H1 (cell line): ENCODE measurements at regions of chr11 and their contacts with region 1.

Region 1: DNA sequence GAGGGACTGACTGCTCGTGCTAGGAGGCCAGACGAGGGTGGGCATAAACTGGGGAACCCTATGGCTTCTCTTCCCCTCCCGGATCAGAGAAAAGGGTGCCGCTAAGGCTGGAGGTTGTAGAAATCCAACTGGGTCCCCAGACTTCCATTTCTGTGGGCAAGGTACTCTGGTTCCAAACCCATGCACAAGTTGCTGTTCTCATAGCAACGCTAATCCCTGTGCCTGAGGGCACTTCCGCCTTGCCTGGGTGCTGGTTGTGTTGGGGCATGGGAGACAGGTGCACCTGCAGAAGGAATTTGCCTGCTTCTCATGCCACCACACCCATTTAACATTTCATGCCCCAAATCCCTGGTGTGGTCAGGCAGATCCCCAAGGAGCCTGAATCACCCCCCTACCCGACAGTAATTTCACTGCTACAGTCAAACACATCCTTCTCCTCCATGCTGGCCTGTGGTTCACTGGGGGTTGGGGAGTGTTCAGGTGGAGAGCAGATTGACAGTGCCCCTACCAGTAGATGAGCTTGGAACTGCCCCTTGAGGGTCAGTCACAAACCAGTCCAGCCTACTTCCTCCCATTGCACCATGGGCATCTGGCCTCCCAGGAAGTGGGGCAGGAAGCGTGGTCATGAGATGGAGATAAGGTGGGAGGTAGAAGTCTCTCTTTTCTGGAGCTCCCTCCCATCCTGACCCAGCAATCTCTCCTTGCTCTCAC is 1.2 kb downstream of the C2CD2L start:
- DNase-seq: peak in 1 of 2 experiments; percentile 63
- H3K4me3 ChIP-seq: peak overlapping the region; percentile 71 to 83 (median 75)
- H3K27ac ChIP-seq: no peak overlapping the region
- H3K4me1 ChIP-seq: peaks cover 0 to 20% (median 5%) of the 10 kb centered on the region in 4 experiments; a peak in 5 of 7 replicates
- H3K27me3 ChIP-seq: peaks cover 2 to 20% (median 15%) of the 10 kb centered on the region in 4 experiments
- CTCF ChIP-seq: no peak
- EP300 ChIP-seq: no peak
- POLR2A ChIP-seq: no peak
- RAD21 ChIP-seq: no peak

Region 2: DNA sequence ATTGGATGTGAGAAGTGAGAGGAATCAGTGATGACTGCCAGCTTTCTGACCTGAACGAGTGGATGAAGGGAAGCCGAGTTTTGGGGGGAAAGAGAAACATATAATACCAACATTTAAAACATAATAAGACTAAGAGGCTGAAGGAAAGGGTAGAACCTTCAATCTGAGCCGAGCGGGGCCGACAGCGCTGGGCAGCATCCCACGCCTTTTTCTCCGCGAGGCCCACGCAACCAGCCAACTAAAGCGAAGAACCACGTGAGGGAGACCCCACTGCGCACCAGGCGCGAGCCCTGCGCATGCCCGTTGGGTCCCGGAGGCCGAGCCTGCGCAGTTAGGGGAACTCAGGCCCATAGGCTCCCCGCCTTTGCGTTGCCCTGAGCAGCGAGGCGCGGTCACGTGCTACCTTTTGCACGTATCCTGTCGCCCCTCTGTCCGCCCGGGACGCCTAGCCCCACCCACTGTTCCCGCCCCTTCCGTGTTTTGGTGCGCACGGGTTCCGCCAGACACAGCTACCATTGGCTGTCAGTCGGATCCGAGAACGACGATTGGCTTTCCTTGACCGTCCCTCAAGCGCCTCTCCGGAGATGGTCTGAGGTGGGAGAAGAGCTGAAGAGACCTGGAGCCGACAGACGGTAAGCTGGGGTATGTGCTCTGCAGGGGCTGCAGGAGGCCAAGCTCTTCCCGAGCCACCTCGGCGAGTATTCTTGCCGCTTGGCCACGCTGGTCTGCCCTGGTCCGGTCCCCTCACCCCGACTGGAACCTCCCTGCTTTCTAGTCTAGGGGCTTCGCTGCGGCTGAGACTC is 12.9 kb after region 1 on chr11 and contains the start of gene HINFP:
- CTCF ChIA-PET with region 1: interaction called, 26 read pairs
- POLR2A ChIA-PET with region 1: interaction called, 42 read pairs
- DNase-seq: peak; percentile 98
- H3K4me3 ChIP-seq: peak within 1 kb of the TSS; percentile 63 to 97 (median 93)
- H3K27ac ChIP-seq: peak within 1 kb of the TSS; percentile 68
- H3K4me1 ChIP-seq: peaks cover 2 to 10% (median 6%) of the 10 kb centered on the region in 4 experiments; a peak in 6 of 7 replicates
- H3K27me3 ChIP-seq: no peaks in the 10 kb centered on the region
- CTCF ChIP-seq: no peak
- EP300 ChIP-seq: no peak
- POLR2A ChIP-seq: peak; percentile 33 to 87
- RAD21 ChIP-seq: no peak
- total RNA-seq, gene HINFP: 35.0 and 36.6 TPM in 2 replicates